ENCODE measurements at regions of chr3 and their contacts with region 1.

Region 1: GRCh38 chr3:141487521-141488252 is 860 bp downstream of the RASA2 start:
- DNase-seq: peak in 8 of 9 donors; percentile 65 to 88 (median 86)
- ATAC-seq: peak; percentile 71
- H3K4me3 ChIP-seq: peak overlapping the region; percentile 65
- H3K4me3 Mint-ChIP-seq: peak overlapping the region; percentile 89 to 97 (median 92)
- H3K27ac ChIP-seq: peak overlapping the region; percentile 94
- H3K27ac Mint-ChIP-seq: peak overlapping the region; percentile 90 to 97 (median 93)
- H3K4me1 ChIP-seq: peaks cover 62% of the 10 kb centered on the region in 2 donors
- H3K4me1 Mint-ChIP-seq: peaks cover 53 to 83% (median 74%) of the 10 kb centered on the region in 7 donors
- H3K27me3 ChIP-seq: no peaks in the 10 kb centered on the region
- H3K27me3 Mint-ChIP-seq: no peaks in the 10 kb centered on the region

Region 2: DNA sequence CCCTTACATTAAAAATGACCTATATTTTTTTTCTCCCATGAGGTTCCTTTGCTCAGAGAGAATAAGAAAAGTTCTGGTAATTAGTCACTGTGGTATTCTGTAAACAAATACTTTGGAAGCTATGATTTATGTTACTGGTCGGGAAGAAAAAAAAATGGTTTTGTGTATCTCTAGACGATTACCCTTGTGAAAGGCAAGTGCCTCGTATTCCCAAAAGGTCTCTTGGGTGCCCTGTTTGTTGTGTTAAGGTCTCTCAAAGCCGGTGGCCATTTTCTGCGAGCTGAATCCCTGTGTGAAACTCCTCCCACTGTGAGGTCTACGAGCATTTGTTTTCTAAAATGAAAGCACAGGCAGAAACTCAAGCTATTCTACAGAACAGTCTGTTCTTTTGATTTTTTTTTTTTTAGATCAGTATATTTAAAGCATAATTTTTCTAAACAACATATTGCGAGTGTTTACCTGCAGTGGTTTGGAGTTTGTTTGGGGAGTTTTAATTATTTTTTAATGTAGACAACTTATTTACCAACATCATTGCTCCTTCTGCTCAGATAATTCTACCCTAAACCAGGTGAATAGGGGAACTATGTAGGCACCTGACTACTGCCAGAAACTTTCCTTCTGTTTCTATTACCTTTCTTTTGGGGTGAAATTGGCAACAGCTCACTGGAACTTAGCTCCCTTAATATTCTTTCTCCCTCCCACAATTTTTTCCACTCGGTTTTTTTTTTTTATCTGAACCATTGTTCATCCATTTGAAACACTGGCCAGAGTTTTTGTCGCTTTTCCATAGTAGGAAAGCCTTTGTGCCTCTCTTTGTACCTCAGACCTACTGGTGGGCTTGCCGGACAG is 75.4 kb before region 1 on chr3:
- CTCF ChIA-PET with region 1: no interaction called
- POLR2A ChIA-PET with region 1: interaction called, 9 read pairs
- intact Hi-C with region 1: loop called in 1 of 2 experiments (anchors 5 kb)
- DNase-seq: peak in 7 of 9 donors; percentile 54 to 76 (median 69)
- ATAC-seq: peak; percentile 78
- H3K4me3 ChIP-seq: peak overlapping the region; percentile 26
- H3K4me3 Mint-ChIP-seq: peak overlapping the region; percentile 62 to 91 (median 86)
- H3K27ac ChIP-seq: peak overlapping the region; percentile 83
- H3K27ac Mint-ChIP-seq: peak overlapping the region; percentile 96 to 100 (median 99)
- H3K4me1 ChIP-seq: peaks cover 59 to 74% of the 10 kb centered on the region in 2 donors
- H3K4me1 Mint-ChIP-seq: peaks cover 52 to 87% (median 74%) of the 10 kb centered on the region in 7 donors
- H3K27me3 ChIP-seq: no peaks in the 10 kb centered on the region
- H3K27me3 Mint-ChIP-seq: no peaks in the 10 kb centered on the region

Region 3: GRCh38 chr3:141426404-141427034 is 61.2 kb before region 1 on chr3:
- CTCF ChIA-PET with region 1: no interaction called
- POLR2A ChIA-PET with region 1: no interaction called
- intact Hi-C with region 1: no loop called
- DNase-seq: no peak
- ATAC-seq: no peak
- H3K4me3 ChIP-seq: no peak overlapping the region
- H3K4me3 Mint-ChIP-seq: no peak overlapping the region
- H3K27ac ChIP-seq: no peak overlapping the region
- H3K27ac Mint-ChIP-seq: peak overlapping the region in 1 of 9 donors; percentile 65
- H3K4me1 ChIP-seq: peaks cover 0 to 8% of the 10 kb centered on the region in 2 donors
- H3K4me1 Mint-ChIP-seq: peaks cover 3 to 34% (median 16%) of the 10 kb centered on the region in 7 donors
- H3K27me3 ChIP-seq: no peaks in the 10 kb centered on the region
- H3K27me3 Mint-ChIP-seq: no peaks in the 10 kb centered on the region

Region 4: GRCh38 chr3:141498598-141499223 is 11.0 kb after region 1 on chr3:
- CTCF ChIA-PET with region 1: interaction called, 6 read pairs
- POLR2A ChIA-PET with region 1: interaction called, 91 read pairs
- intact Hi-C with region 1: loop called (anchors 1 kb)
- DNase-seq: peak; percentile 34 to 96 (median 94)
- ATAC-seq: peak; percentile 91
- H3K4me3 ChIP-seq: peak overlapping the region; percentile 52
- H3K4me3 Mint-ChIP-seq: peak overlapping the region in 9 of 10 donors; percentile 68 to 89 (median 82)
- H3K27ac ChIP-seq: peak overlapping the region; percentile 73
- H3K27ac Mint-ChIP-seq: peak overlapping the region in 5 of 9 donors; percentile 93 to 99 (median 96)
- H3K4me1 ChIP-seq: peaks cover 66 to 69% of the 10 kb centered on the region in 2 donors
- H3K4me1 Mint-ChIP-seq: peaks cover 32 to 76% (median 50%) of the 10 kb centered on the region in 7 donors
- H3K27me3 ChIP-seq: no peaks in the 10 kb centered on the region
- H3K27me3 Mint-ChIP-seq: no peaks in the 10 kb centered on the region

Region 5: DNA sequence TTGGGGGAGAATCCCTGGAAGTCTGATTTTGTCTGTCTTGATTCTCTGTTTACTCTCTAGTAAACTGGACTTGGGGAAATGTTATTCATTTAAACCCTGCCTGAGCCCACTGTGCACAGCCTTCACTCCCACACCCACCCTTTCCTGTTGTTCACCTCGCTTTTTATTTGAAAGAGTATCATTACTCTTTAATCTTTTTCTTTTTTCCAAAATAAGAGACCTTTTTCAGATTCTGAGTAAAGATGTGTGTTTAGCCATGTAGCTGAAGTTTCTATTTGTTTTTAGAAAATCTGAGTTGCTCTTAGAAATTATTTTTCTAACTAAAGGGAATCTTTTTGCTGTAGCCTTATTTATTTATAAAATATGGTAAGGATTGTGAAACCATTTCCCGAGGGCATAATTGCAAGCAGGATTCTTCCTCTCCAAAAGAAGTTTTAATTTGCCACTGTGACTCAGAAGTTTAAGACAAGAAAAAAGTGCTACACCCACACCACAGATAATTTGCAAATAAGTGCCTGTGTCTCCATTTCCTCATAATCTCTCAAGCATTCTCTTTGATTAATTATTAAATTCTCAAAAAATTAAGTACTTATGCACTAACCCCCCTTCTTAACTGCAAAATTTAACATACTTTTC is 42.6 kb after region 1 on chr3:
- CTCF ChIA-PET with region 1: no interaction called
- POLR2A ChIA-PET with region 1: interaction called, 30 read pairs
- intact Hi-C with region 1: loop called in 1 of 2 experiments (anchors 1 kb)
- DNase-seq: peak in 6 of 9 donors; percentile 44 to 74 (median 60)
- ATAC-seq: peak; percentile 87
- H3K4me3 ChIP-seq: peak overlapping the region; percentile 4
- H3K4me3 Mint-ChIP-seq: peak overlapping the region; percentile 40 to 94 (median 82)
- H3K27ac ChIP-seq: peak overlapping the region; percentile 62
- H3K27ac Mint-ChIP-seq: peak overlapping the region in 8 of 9 donors; percentile 87 to 97 (median 94)
- H3K4me1 ChIP-seq: peaks cover 22 to 77% of the 10 kb centered on the region in 2 donors
- H3K4me1 Mint-ChIP-seq: peaks cover 40 to 86% (median 83%) of the 10 kb centered on the region in 7 donors
- H3K27me3 ChIP-seq: no peaks in the 10 kb centered on the region
- H3K27me3 Mint-ChIP-seq: no peaks in the 10 kb centered on the region

Region 6: DNA sequence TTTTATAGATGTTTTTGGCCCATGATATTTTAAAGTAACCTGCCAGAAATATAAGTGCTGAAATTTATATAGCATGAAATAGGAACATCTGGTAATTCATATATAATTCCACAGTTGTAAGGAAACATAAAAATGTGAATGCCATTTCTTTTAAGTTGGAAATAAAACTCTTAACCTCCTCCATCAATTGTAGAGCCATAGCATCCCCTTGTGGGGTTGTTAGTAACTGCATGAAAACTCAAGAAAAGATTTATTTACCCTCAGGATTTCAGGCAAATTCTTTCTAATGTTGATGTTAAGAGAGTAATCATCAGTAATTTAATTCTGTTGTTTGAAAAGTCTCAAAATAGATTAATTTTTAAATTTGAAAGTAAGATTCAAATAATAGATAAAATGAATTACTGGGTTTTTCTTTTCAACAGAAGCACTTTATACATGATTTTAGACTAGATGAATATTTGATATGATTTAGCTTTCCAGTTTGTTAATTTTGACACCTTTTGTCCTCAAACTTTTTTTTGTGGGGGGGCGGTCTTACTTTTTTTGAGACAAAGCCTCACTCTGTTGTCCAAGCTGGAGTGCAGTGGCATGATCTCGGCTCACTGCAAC is 73.8 kb after region 1 on chr3:
- CTCF ChIA-PET with region 1: interaction called, 14 read pairs
- POLR2A ChIA-PET with region 1: interaction called, 30 read pairs
- intact Hi-C with region 1: loop called in 1 of 2 experiments (anchors 1 kb)
- DNase-seq: peak in 7 of 9 donors; percentile 59 to 78 (median 73)
- ATAC-seq: peak; percentile 80
- H3K4me3 ChIP-seq: no peak overlapping the region
- H3K4me3 Mint-ChIP-seq: peak overlapping the region in 4 of 10 donors; percentile 17 to 54 (median 32)
- H3K27ac ChIP-seq: peak overlapping the region; percentile 25
- H3K27ac Mint-ChIP-seq: peak overlapping the region in 8 of 9 donors; percentile 55 to 89 (median 76)
- H3K4me1 ChIP-seq: peaks cover 0 to 37% of the 10 kb centered on the region in 2 donors
- H3K4me1 Mint-ChIP-seq: peaks cover 11 to 47% (median 24%) of the 10 kb centered on the region in 7 donors
- H3K27me3 ChIP-seq: no peaks in the 10 kb centered on the region
- H3K27me3 Mint-ChIP-seq: no peaks in the 10 kb centered on the region

Region 7: GRCh38 chr3:141608438-141608837 is 120.8 kb after region 1 on chr3:
- CTCF ChIA-PET with region 1: no interaction called
- POLR2A ChIA-PET with region 1: no interaction called
- intact Hi-C with region 1: no loop called
- DNase-seq: no peak
- ATAC-seq: no peak
- H3K4me3 ChIP-seq: no peak overlapping the region
- H3K4me3 Mint-ChIP-seq: no peak overlapping the region
- H3K27ac ChIP-seq: no peak overlapping the region
- H3K27ac Mint-ChIP-seq: peak overlapping the region in 4 of 9 donors; percentile 12 to 89 (median 62)
- H3K4me1 ChIP-seq: no peaks in the 10 kb centered on the region
- H3K4me1 Mint-ChIP-seq: peaks cover 0 to 18% (median 8%) of the 10 kb centered on the region in 7 donors
- H3K27me3 ChIP-seq: no peaks in the 10 kb centered on the region
- H3K27me3 Mint-ChIP-seq: no peaks in the 10 kb centered on the region

Region 8: DNA sequence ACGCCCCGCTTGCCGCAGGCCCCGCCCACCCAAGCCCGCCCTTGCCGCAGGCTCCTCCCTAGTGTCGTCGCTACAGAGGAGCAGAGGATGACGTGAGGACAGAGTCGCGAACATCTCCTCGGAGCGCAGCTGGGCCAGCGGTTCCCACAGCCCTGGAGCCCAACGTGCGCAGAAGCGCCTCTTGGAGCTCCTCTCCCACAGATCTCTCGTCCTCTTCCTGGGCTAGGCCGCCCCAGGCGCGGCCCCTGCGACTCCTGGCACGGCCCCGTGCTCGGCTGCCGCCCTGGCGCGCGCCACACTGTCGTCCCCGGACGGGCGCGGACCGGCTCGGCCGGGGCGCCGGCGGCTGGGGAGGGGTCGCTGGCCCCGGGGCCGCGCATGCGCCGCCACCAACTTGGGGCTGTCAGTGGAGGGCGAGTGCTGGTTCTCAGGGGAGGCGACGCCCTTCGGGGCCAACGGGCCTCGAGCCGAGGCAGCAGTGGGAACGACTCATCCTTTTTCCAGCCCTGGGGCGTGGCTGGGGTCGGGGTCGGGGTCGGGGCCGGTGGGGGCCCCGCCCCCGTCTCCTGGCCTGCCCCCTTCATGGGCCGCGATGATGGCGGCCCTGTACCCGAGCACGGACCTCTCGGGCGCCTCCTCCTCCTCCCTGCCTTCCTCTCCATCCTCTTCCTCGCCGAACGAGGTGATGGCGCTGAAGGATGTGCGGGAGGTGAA is 1236.4 kb after region 1 on chr3 and contains the start of gene TRPC1:
- CTCF ChIA-PET with region 1: no interaction called
- POLR2A ChIA-PET with region 1: no interaction called
- intact Hi-C with region 1: loop called in 1 of 2 experiments (anchors 10 kb)
- DNase-seq: peak in 8 of 9 donors; percentile 58 to 83 (median 78)
- ATAC-seq: peak; percentile 97
- H3K4me3 ChIP-seq: peak within 1 kb of the TSS; percentile 76
- H3K4me3 Mint-ChIP-seq: peak within 1 kb of the TSS; percentile 80 to 92 (median 88)
- H3K27ac ChIP-seq: peak within 1 kb of the TSS; percentile 76
- H3K27ac Mint-ChIP-seq: peak within 1 kb of the TSS; percentile 31 to 94 (median 88)
- H3K4me1 ChIP-seq: peaks cover 0 to 4% of the 10 kb centered on the region in 2 donors
- H3K4me1 Mint-ChIP-seq: peaks cover 5 to 20% (median 11%) of the 10 kb centered on the region in 7 donors
- H3K27me3 ChIP-seq: peaks cover 0 to 2% of the 10 kb centered on the region in 2 donors
- H3K27me3 Mint-ChIP-seq: peaks cover 20 to 67% (median 22%) of the 10 kb centered on the region in 5 donors
- total RNA-seq, gene TRPC1: 1.5 to 7.6 (median 5.3) TPM